Right ventricle myocardium inferior (tissue), 1 donor: ENCODE measurements at regions of chr7 and their contacts with region 1.

Region 1: DNA sequence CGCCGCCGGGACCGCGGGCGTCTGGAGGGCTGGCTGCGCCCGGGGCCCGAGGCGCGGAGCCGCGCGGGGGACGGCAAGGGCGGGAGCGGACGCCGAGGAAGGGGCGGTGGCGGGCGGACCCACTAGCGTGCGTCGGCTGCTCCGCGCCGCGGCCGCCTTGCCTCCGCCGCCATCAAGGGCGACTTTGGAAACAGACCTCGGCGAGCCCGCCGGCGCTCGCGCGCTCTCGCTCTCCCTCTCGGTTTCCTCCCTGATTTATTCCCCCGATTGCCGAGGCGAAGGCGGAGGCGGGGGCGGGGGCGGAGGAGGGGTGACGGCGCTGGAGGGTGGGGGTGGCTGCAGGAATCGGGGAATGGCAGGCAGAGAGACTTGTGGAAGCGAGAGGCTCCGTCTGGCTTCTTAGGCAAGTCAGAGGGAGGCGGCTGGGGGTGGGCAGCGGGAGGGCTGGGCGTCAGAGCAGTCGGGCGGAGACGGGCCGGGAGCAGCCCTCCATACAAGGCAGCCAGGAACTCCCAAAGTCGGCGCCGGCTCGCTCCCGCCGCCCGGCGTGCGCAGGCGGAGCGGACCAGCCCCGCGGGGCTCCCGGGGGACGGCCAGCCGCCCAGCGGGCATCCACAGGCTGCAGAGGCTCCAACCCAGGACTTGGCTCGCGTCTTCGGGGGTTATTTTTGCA is at the start of gene CACNA2D1:
- DNase-seq: peak; percentile 89
- ATAC-seq: peak; percentile 97
- total RNA-seq, gene CACNA2D1: 46.1 TPM

Region 2: GRCh38 chr7:82049891-82050533 is 393.7 kb before region 1 on chr7:
- intact Hi-C with region 1: loop called (anchors 10 kb)
- DNase-seq: no peak
- ATAC-seq: no peak

Region 3: DNA sequence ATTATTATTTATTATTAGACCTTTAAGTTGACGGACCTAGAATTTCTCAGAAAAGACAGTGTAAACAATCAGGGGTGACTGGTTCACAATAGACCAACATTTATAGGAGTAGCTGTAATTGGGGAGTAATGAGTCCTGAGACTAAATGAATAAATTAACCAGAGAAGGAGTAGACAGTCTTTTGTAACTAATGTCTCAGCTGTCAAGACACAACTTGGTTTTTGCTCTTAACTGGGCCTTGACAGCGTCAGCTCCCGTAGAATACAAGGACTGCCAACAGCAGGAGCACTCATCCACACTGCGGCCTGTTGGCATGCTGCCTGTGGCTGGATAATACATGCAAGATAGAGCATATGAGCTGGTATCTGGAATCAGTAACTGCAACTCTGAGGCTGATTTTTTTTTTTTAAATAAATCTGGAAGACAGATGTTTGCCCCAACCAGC is 124.0 kb before region 1 on chr7:
- intact Hi-C with region 1: loop called (anchors 10 kb)
- DNase-seq: peak; percentile 93
- ATAC-seq: peak; percentile 97

Region 4: DNA sequence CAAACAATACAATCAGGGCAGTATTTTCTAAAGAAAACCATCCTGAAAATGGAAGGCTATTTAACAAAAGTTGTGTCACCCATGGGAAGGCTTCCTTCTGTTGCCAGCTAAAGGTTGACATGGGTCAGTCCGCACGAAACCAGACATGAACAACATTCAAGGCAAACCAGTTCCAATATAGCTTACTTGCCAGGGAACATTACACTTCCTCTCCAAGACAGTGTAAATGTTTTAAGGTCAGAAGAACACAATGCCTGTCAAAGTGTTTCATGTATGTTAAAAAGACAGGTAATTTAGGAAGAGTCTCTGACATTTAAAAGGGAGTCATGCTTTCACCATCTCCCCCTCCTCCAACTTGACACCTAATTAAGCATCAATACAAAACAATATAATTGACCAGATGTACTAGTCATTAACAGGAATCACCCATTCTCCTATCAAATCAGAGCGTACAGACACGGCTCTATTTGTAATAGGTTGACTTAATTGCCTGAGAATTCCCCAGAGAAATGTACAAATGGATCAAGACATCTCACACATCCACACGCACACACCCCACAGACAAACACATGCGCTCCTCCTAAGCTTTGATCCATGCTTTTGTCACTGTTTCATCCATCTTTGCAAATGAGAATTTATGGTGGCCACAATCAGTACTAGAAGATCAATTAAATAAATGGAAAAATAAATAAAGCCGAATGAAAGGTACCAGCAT is 69.6 kb before region 1 on chr7:
- intact Hi-C with region 1: no loop called
- DNase-seq: no peak
- ATAC-seq: no peak

Region 5: DNA sequence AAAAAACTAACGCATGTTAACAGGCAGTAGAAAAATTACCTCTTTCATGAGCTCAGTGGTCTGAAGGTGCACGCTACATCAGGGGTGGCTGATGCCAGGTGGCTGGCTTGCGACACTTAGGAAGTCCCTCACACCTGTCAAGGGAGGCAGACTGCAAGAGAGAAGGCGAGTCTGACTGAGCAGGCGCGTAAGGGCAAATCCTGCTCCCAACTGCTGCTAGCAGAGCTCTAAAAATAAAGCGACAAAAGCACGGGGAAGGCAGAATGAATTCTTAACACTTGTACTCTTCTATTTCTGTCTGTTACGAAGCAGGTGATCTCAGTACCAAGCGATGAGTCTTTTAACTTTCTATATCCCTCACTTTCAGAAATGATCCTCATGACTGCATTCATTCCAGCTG is 33.2 kb before region 1 on chr7:
- intact Hi-C with region 1: no loop called
- DNase-seq: no peak
- ATAC-seq: peak; percentile 95